ENCODE measurements at regions of chr5 and their contacts with region 1.

Region 1: GRCh38 chr5:140401362-140402257 is at the start of gene ANKHD1:
- DNase-seq: peak; percentile 90
- ATAC-seq: peak; percentile 79
- H3K4me3 Mint-ChIP-seq: no peak within 1 kb of the TSS
- H3K27ac Mint-ChIP-seq: no peak within 1 kb of the TSS
- H3K4me1 Mint-ChIP-seq: peaks cover 38% of the 10 kb centered on the region
- H3K27me3 Mint-ChIP-seq: no peaks in the 10 kb centered on the region
- CTCF ChIP-seq: no peak
- total RNA-seq, gene ANKHD1: 166 and 187 TPM in 2 replicates

Region 2: GRCh38 chr5:139312075-139312474 is 1089.5 kb before region 1 on chr5:
- CTCF ChIA-PET with region 1: no interaction called
- POLR2A ChIA-PET with region 1: no interaction called
- intact Hi-C with region 1: no loop called
- DNase-seq: no peak
- ATAC-seq: no peak
- H3K4me3 Mint-ChIP-seq: no peak overlapping the region
- H3K27ac Mint-ChIP-seq: no peak overlapping the region
- H3K4me1 Mint-ChIP-seq: peaks cover 62% of the 10 kb centered on the region
- H3K27me3 Mint-ChIP-seq: no peaks in the 10 kb centered on the region
- CTCF ChIP-seq: no peak

Region 3: GRCh38 chr5:140073296-140073695 is 328.3 kb before region 1 on chr5:
- CTCF ChIA-PET with region 1: no interaction called
- POLR2A ChIA-PET with region 1: no interaction called
- intact Hi-C with region 1: no loop called
- DNase-seq: no peak
- ATAC-seq: no peak
- H3K4me3 Mint-ChIP-seq: no peak overlapping the region
- H3K27ac Mint-ChIP-seq: no peak overlapping the region
- H3K4me1 Mint-ChIP-seq: no peaks in the 10 kb centered on the region
- H3K27me3 Mint-ChIP-seq: peaks cover 17% of the 10 kb centered on the region
- CTCF ChIP-seq: peak; percentile 87

Region 4: GRCh38 chr5:140107312-140108083 is 294.1 kb before region 1 on chr5:
- CTCF ChIA-PET with region 1: no interaction called
- POLR2A ChIA-PET with region 1: interaction called, 5 read pairs
- intact Hi-C with region 1: loop called (anchors 1 kb)
- DNase-seq: peak; percentile 92
- ATAC-seq: peak; percentile 89
- H3K4me3 Mint-ChIP-seq: peak overlapping the region; percentile 98
- H3K27ac Mint-ChIP-seq: peak overlapping the region; percentile 97
- H3K4me1 Mint-ChIP-seq: peaks cover 44% of the 10 kb centered on the region
- H3K27me3 Mint-ChIP-seq: peaks cover 15% of the 10 kb centered on the region
- CTCF ChIP-seq: no peak

Region 5: DNA sequence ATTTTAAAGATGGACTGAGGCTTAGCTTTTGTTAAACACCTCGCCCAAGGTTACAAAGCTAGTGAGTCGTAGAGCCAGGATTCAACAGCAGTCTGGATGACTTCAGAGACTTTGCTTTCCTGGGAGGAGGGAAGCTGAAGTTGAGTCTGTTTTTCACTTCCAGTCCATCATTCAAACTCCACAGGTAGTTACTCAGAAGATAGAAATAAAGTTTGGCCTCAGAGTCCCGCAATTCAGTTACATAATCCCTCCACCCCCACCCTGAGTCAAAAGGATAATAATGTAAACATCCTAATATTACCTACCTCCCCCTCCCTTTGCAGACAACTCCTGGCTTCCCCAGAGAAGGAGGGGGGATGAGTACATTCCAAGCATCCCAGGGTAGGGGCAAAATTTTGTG is 63.3 kb before region 1 on chr5:
- CTCF ChIA-PET with region 1: no interaction called
- POLR2A ChIA-PET with region 1: no interaction called
- intact Hi-C with region 1: no loop called
- DNase-seq: no peak
- ATAC-seq: no peak
- H3K4me3 Mint-ChIP-seq: no peak overlapping the region
- H3K27ac Mint-ChIP-seq: no peak overlapping the region
- H3K4me1 Mint-ChIP-seq: peaks cover 25% of the 10 kb centered on the region
- H3K27me3 Mint-ChIP-seq: no peaks in the 10 kb centered on the region
- CTCF ChIP-seq: no peak

Region 6: GRCh38 chr5:140547508-140548299 is 146.1 kb after region 1 on chr5 and contains the start of gene EIF4EBP3:
- CTCF ChIA-PET with region 1: no interaction called
- POLR2A ChIA-PET with region 1: interaction called, 18 read pairs
- intact Hi-C with region 1: loop called (anchors 5 kb)
- DNase-seq: peak; percentile 74
- ATAC-seq: peak; percentile 97
- H3K4me3 Mint-ChIP-seq: peak within 1 kb of the TSS; percentile 86
- H3K27ac Mint-ChIP-seq: peak within 1 kb of the TSS; percentile 95
- H3K4me1 Mint-ChIP-seq: peaks cover 28% of the 10 kb centered on the region
- H3K27me3 Mint-ChIP-seq: no peaks in the 10 kb centered on the region
- CTCF ChIP-seq: no peak
- total RNA-seq, gene EIF4EBP3: 14.4 and 18.2 TPM in 2 replicates

Region 7: DNA sequence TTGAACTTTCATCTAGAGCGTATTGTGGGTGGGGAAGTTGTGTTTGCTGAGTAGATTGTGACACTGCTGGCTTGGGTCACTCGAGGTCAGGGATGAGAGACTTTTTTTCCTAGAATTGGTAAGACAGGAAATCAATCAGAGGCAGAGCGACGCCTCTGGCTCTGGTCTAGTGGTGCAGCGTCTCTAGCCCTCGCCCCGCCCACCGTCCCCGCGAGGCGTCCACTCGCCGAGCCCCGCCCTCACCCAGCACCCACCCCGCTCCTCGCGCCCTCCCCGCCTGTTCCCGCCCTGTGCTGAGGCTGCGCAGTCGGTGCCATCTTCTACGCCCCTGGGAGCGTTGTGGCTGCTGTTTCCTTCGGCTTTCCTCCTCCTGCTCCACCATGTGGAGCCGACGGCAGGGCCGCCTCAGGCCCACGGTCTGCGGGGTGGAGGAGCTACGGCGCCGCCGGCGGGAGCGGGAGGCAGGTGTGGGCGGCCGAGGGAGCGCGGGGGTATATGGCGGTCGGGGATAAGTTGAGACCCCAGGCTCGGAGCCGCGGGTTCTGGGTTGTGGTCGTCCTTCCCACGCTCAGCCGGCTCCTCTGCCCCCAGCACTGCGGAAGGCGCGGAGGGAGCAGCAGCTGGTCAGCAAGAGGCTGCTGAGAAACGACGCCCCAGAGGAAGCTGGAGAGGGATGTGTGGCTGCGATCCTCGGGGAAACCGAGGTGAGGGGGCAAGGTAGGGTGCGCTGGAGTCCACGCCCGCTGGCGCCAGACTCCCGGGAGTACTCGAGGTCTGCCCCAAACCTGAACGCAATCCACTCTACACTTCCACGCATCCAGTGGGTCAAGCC is 237.8 kb after region 1 on chr5 and contains the start of gene TMCO6:
- CTCF ChIA-PET with region 1: no interaction called
- POLR2A ChIA-PET with region 1: interaction called, 6 read pairs
- intact Hi-C with region 1: loop called (anchors 1 kb)
- DNase-seq: peak; percentile 91
- ATAC-seq: peak; percentile 99
- H3K4me3 Mint-ChIP-seq: peak within 1 kb of the TSS; percentile 92
- H3K27ac Mint-ChIP-seq: peak within 1 kb of the TSS; percentile 98
- H3K4me1 Mint-ChIP-seq: peaks cover 29% of the 10 kb centered on the region
- H3K27me3 Mint-ChIP-seq: no peaks in the 10 kb centered on the region
- CTCF ChIP-seq: no peak
- total RNA-seq, gene TMCO6: 20.1 and 23.3 TPM in 2 replicates

Region 8: GRCh38 chr5:140690941-140691924 is 289.6 kb after region 1 on chr5 and contains the starts of genes HARS1 and HARS2:
- CTCF ChIA-PET with region 1: no interaction called
- POLR2A ChIA-PET with region 1: interaction called, 29 read pairs
- intact Hi-C with region 1: loop called (anchors 1 kb)
- DNase-seq: peak; percentile 70
- ATAC-seq: peak; percentile 95
- H3K4me3 Mint-ChIP-seq: peak within 1 kb of the TSS; percentile 100
- H3K27ac Mint-ChIP-seq: peak within 1 kb of the TSS; percentile 97
- H3K4me1 Mint-ChIP-seq: peaks cover 31% of the 10 kb centered on the region
- H3K27me3 Mint-ChIP-seq: no peaks in the 10 kb centered on the region
- CTCF ChIP-seq: no peak
- total RNA-seq, gene HARS1: 78.2 and 84.0 TPM in 2 replicates
- total RNA-seq, gene HARS2: 45.7 and 48.5 TPM in 2 replicates

Region 9: DNA sequence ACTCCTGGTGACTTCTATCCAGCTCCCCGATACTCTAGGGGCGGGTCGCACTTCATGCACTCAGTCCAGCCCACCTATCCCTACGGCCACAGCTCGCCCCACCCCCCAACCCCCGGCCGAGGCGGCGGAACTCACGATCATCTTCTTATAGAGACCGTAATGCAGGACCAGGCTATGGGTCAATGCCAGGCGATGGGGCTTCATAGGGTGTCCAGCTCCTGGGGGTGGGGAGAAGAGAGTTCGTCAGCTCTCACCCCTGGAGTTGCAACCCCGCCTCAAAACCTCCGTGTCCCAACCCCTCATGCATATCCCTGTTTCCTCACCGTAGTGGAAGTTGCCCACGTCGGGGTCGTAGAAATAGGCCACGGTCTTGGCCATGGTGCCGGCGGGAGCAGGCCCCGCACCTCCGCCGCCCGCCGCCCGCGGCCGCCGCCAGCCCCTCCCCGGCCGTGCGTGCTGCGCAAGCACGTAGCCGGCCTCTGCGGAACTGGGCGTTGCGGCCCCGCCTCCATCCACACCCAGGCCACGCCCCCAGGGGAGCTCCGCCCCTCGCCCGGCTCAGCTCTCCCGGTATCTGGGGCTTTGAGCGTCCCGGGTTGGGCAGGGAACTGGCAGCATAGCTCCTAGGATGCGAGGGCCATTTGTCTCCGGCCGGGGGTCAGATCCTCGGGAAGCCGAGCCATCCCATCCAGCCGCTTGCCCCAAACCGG is 1235.0 kb after region 1 on chr5 and contains the starts of genes HDAC3 and RELL2:
- CTCF ChIA-PET with region 1: no interaction called
- POLR2A ChIA-PET with region 1: no interaction called
- intact Hi-C with region 1: loop called (anchors 5 kb)
- DNase-seq: peak; percentile 99
- ATAC-seq: peak; percentile 84
- H3K4me3 Mint-ChIP-seq: peak within 1 kb of the TSS; percentile 89
- H3K27ac Mint-ChIP-seq: peak within 1 kb of the TSS; percentile 73
- H3K4me1 Mint-ChIP-seq: peaks cover 39% of the 10 kb centered on the region
- H3K27me3 Mint-ChIP-seq: no peaks in the 10 kb centered on the region
- CTCF ChIP-seq: no peak
- total RNA-seq, gene HDAC3: 101 and 102 TPM in 2 replicates
- total RNA-seq, gene RELL2: 16.8 and 18.9 TPM in 2 replicates